ENCODE measurements at regions of chr2 and their contacts with region 1.

Region 1: GRCh38 chr2:10188216-10188615 is 65.7 kb downstream of the RRM2 start:
- DNase-seq: no peak

Region 2: GRCh38 chr2:10028988-10029874 is 159.0 kb before region 1 on chr2:
- intact Hi-C with region 1: no loop called
- DNase-seq: peak; percentile 91

Region 3: GRCh38 chr2:10148261-10148660 is 40.0 kb before region 1 on chr2:
- intact Hi-C with region 1: loop called in 1 of 2 experiments (anchors 1 kb)
- DNase-seq: no peak

Region 4: DNA sequence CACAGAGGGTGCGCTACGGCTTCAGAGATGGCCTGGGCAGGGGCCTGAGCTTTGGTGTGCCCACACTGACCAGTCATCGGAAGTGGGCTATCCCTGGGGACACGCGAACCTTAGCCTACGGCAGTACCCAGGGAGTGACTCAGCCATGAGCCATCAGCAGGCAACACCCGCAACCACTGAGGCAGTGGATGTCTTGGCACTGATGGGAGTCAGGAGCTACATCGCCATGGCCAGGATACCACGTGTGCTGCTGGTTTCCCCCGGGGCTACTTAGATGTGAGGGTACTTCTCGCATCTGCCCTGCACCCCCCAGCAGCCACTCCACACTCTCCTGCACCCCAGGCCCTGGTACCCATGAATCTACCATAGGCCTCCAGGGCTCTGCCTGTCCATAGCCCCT is 101.7 kb after region 1 on chr2:
- intact Hi-C with region 1: no loop called
- DNase-seq: no peak

Region 5: GRCh38 chr2:10408649-10409579 is 220.7 kb after region 1 on chr2:
- intact Hi-C with region 1: no loop called
- DNase-seq: peak; percentile 93